ENCODE measurements at regions of chr19 and their contacts with region 1.

Region 1: GRCh38 chr19:49817964-49818648 is at the start of gene MED25:
- DNase-seq: peak; percentile 85 to 92 (median 89)
- ATAC-seq: peak; percentile 52 to 80 (median 75)
- H3K4me3 ChIP-seq: peak within 1 kb of the TSS; percentile 45 to 93 (median 80)
- H3K27ac ChIP-seq: peak within 1 kb of the TSS; percentile 87 to 100 (median 97)
- H3K4me1 ChIP-seq: peaks cover 0 to 40% (median 28%) of the 10 kb centered on the region in 12 donors
- H3K27me3 ChIP-seq: no peaks in the 10 kb centered on the region
- CTCF ChIP-seq: peak in 7 of 12 donors; percentile 10 to 49 (median 28)
- POLR2A ChIP-seq: peak; percentile 40 to 81
- total RNA-seq, gene MED25: 45.8 to 119 (median 54.7) TPM

Region 2: GRCh38 chr19:49631014-49631588 is 187.0 kb before region 1 on chr19:
- intact Hi-C with region 1: loop called in 1 of 10 experiments (anchors 5 kb)
- DNase-seq: no peak
- ATAC-seq: peak in 3 of 4 donors; percentile 11 to 36 (median 16)
- H3K4me3 ChIP-seq: no peak overlapping the region
- H3K27ac ChIP-seq: peak overlapping the region in 5 of 12 donors; percentile 9 to 46 (median 24)
- H3K4me1 ChIP-seq: peaks cover 0 to 29% (median 21%) of the 10 kb centered on the region in 12 donors
- H3K27me3 ChIP-seq: no peaks in the 10 kb centered on the region
- CTCF ChIP-seq: no peak
- POLR2A ChIP-seq: no peak

Region 3: DNA sequence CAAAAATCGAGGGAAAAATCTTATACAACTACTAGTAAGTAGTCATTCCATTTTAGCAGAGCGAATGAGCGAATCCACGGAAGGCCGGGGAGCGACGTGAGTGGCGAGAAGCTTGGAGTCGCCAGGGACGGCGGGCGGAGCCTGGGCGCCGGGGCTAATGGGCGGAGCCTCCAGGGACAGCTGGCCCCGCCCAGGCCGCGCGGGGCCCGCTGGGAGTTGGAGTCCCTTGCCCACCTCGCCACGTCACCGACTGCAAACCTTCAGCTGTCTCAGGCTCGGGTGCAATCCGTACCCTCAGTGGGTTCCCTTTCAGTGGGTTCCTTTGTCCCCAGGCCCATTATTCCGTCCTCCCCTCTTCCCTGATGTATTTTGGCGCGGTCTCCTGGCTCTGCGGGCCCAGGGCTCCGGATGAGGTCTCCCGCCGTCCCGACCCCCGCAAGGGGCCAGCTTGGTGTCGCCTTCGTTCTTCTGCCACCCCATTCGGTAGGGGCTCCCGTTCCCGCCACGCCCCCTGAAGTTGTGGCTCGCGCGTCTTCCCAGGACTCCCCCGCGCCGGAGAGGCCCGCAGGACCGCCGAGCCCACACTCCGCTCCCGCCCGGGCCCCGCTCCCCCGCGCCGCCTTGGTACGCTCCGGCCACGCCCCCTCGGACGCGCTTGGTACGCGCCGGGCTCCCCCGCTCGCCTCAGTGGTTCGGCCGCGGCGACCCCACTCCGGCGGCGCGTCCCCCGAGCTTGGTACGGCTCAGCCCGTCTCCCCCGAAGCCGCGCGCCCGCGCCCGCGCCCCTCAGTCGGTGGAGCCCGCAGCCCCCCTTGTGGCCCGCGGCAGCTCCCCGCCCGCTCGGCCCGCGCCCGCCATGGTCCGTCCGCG is 32.6 kb after region 1 on chr19 and contains the start of gene PTOV1:
- intact Hi-C with region 1: loop called in 8 of 10 experiments (anchors 1 to 5 kb)
- DNase-seq: peak; percentile 92 to 96 (median 93)
- ATAC-seq: peak; percentile 94 to 97 (median 94)
- H3K4me3 ChIP-seq: peak within 1 kb of the TSS; percentile 60 to 99 (median 76)
- H3K27ac ChIP-seq: peak within 1 kb of the TSS; percentile 93 to 100 (median 99)
- H3K4me1 ChIP-seq: peaks cover 3 to 42% (median 25%) of the 10 kb centered on the region in 12 donors
- H3K27me3 ChIP-seq: no peaks in the 10 kb centered on the region
- CTCF ChIP-seq: no peak
- POLR2A ChIP-seq: peak; percentile 29 to 86
- total RNA-seq, gene PTOV1: 70.9 to 109 (median 91.5) TPM

Region 4: DNA sequence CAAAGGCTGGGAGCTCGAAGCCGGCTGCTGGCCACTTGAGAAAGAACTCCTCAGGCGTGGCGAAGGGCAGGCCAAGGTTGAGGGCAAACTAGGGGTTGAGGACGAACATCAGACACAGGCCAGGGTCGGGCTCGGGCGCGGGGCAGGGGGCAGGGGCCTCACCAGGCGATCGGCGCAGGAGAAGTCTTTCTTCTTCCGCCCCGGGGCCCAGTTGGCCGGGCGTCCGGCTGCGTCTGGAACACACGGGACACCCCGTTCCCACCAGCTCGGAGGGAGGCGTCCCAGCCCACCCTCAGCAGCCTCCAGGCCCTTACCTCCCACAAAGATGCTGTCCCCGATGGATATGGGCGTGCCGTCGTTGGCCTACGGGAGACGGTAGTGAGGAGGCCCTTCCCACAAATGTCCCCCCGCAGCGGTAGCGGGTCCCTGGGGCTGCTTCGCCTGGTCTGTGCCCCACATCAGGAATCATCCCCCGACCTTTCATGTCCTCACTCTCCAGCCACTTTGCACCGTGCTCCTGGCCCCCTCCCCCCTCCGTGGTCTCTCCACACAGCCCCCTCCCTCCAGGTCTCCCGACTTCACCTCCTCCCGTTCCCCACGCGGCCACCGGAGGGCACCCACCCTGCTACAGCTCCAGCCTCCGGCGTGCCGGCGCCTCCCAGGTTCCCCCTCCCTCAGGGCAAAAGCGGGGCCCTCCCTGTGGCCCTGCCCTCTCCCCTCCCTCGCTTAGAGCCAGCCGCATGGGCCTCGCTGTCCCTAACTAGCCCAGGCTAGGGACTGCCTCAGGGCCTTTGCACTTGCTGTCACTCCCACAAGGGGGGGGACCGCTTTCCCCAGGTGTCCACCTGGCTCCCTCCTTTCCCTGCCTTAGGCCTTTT is 44.5 kb after region 1 on chr19:
- intact Hi-C with region 1: loop called in 8 of 10 experiments (anchors 1 to 5 kb)
- DNase-seq: no peak
- ATAC-seq: no peak
- H3K4me3 ChIP-seq: no peak overlapping the region
- H3K27ac ChIP-seq: peak overlapping the region in 1 of 12 donors; percentile 14
- H3K4me1 ChIP-seq: peaks cover 7 to 45% (median 24%) of the 10 kb centered on the region in 12 donors
- H3K27me3 ChIP-seq: no peaks in the 10 kb centered on the region
- CTCF ChIP-seq: peak in 1 of 12 donors; percentile 1
- POLR2A ChIP-seq: no peak

Region 5: GRCh38 chr19:49869441-49870176 is 51.5 kb after region 1 on chr19:
- intact Hi-C with region 1: loop called in 6 of 10 experiments (anchors 1 to 5 kb)
- DNase-seq: peak; percentile 97
- ATAC-seq: peak; percentile 80 to 91 (median 86)
- H3K4me3 ChIP-seq: peak overlapping the region; percentile 36 to 79 (median 60)
- H3K27ac ChIP-seq: peak overlapping the region; percentile 83 to 98 (median 94)
- H3K4me1 ChIP-seq: peaks cover 9 to 58% (median 43%) of the 10 kb centered on the region in 12 donors
- H3K27me3 ChIP-seq: no peaks in the 10 kb centered on the region
- CTCF ChIP-seq: peak in 2 of 12 donors; percentile 12 to 33
- POLR2A ChIP-seq: peak; percentile 77 to 91

Region 6: GRCh38 chr19:49877020-49877878 is 59.1 kb after region 1 on chr19 and contains the starts of genes AKT1S1 and TBC1D17:
- intact Hi-C with region 1: loop called in 5 of 10 experiments (anchors 1 to 2 kb)
- DNase-seq: peak; percentile 99 to 100 (median 99)
- ATAC-seq: peak; percentile 84 to 90 (median 87)
- H3K4me3 ChIP-seq: peak within 1 kb of the TSS; percentile 72 to 99 (median 87)
- H3K27ac ChIP-seq: peak within 1 kb of the TSS; percentile 96 to 100 (median 98)
- H3K4me1 ChIP-seq: peaks cover 0 to 30% (median 19%) of the 10 kb centered on the region in 12 donors
- H3K27me3 ChIP-seq: no peaks in the 10 kb centered on the region
- CTCF ChIP-seq: no peak
- POLR2A ChIP-seq: peak; percentile 58 to 70
- total RNA-seq, gene AKT1S1: 25.3 to 46.0 (median 31.2) TPM
- total RNA-seq, gene TBC1D17: 30.1 to 54.8 (median 39.8) TPM

Region 7: DNA sequence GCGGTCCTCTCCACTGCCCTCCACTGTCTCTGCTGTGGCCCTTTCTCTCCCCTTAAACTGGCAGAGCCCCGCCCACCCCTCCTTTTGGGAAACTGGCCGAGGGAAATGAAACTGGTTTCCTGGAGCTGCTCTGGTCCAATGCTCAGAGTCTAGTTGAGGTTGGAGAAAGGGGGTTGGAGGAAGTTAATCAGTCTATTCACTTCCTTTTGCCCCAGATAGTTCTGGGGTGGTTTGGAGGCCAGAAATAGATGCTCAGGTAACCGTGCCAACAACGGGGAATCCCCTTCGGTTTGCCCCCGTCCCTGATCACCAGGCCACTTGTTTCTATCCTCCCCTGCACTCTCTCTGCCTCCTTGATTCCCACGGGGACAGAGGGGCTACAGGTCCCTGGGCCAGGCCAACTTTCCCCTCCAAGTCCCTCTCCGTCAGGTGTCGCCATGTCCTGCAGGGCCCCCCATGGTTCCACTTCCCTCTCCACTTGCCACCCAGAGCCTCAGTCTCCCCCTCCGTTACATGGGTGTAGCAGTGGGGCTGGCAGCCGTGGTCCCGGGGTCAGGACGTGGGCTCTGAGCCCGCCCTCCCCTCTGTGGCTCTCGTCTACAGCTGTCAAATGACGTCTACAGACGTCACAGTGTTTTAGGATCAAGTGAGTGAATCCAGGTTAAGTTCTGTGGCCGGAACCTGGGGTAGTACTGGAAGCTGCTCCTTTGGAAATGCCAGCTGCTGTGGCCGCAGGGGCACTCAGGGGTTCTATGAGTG is 78.9 kb after region 1 on chr19 and contains the start of gene IL4I1:
- intact Hi-C with region 1: no loop called
- DNase-seq: peak in 4 of 5 donors; percentile 46 to 73 (median 59)
- ATAC-seq: peak; percentile 9 to 65 (median 34)
- H3K4me3 ChIP-seq: peak within 1 kb of the TSS in 6 of 12 donors; percentile 11 to 35 (median 13)
- H3K27ac ChIP-seq: peak within 1 kb of the TSS in 10 of 12 donors; percentile 28 to 89 (median 46)
- H3K4me1 ChIP-seq: peaks cover 0 to 23% (median 6%) of the 10 kb centered on the region in 12 donors
- H3K27me3 ChIP-seq: peaks cover 0 to 4% (median 0%) of the 10 kb centered on the region in 9 donors
- CTCF ChIP-seq: no peak
- POLR2A ChIP-seq: no peak
- total RNA-seq, gene IL4I1: 0.27 to 21.6 (median 0.64) TPM in 6 of 9 donors, not detected in the others